Cardiac septum (tissue), 1 donor: ENCODE measurements at regions of chr2 and their contacts with region 1.

Region 1: DNA sequence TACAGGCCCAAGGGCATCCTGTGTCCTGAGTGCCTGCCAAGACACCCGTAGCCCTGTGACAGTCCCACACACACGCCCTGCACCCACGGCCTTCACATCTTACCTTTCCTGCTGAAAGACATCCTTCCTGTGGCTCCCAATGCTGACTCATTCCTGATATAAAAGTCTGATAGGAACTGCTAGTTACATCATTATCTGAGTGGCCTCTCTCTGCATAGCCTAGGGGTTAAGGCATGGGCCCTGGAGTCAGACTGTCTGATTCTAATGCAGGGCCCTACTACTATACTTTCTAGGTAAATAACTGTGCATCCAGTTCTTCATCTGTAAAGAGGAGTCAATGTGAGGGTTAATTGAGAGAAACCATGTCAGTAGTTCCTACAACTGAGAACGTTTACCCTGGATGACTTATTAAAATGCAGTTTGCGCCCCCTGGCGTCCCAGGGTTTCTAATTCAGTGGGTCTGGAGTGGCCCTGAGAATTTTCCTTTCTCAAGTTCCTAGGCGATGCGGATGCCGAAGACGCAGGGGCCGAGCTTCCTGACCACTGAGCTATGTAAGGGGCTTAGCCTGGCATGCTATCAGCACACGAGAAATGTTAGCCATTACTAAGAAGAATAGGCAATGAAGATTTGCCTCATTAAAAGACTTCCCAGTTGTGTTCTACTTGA is 6.0 kb upstream of the GPR45 start:
- DNase-seq: no peak

Region 2: DNA sequence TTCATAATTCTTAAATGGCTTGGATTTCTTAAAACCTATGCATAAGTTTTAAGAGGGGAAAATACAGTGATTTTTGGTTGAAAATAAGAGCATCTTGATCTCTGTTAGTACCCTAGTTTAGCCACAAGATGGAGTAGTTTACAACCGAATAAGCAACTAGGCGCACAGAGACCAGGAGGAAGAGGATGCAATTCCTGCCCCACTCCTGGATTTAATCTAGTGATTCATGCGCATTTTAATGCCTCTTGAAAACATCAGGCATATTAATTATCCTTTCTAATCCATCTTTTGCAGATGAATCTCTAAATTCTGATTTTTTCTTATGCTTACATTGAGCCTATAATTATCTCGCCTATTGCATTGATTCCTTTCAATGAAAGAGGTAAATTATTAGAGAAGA is 121.0 kb before region 1 on chr2:
- intact Hi-C with region 1: loop called (anchors 1 kb)
- DNase-seq: no peak